ENCODE measurements at regions of chr1 and their contacts with region 1.

Region 1: DNA sequence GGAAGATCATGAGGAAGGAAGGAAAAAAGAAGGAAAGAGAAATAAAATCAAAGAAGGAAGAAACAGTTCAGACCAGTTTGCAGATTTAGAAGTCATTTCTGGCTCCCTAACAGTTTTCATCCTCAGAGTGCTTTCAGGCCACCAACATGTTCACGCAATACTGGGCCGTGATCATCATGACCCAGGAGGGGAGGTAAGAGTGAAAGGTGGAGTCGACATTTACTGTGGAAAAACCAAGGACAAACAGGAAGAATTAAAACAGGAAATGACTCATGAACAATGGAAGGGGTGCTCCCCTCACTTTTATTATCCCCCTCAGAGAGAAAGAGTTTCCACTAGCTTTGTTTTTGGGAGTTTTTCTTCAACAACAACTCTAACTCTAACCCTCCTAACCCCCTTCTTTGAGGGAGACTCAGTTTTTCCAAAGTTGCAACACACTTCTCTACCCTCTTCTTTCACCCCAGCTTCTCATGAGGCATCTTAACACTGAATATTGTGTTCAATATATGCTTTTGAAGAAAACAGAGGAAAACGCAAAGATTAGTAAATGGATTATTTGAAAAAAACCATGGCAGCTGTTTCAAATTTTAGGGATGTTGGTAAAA is 60.4 kb downstream of the VANGL2 start:
- DNase-seq: no peak
- H3K4me3 Mint-ChIP-seq: peak overlapping the region; percentile 56
- H3K27ac Mint-ChIP-seq: peak overlapping the region; percentile 99
- H3K4me1 Mint-ChIP-seq: peaks cover 87% of the 10 kb centered on the region
- H3K27me3 Mint-ChIP-seq: no peaks in the 10 kb centered on the region

Region 2: GRCh38 chr1:160428655-160429054 is 32.1 kb before region 1 on chr1:
- intact Hi-C with region 1: loop called (anchors 1 kb)
- DNase-seq: peak; percentile 15
- H3K4me3 Mint-ChIP-seq: no peak overlapping the region
- H3K27ac Mint-ChIP-seq: peak overlapping the region; percentile 91
- H3K4me1 Mint-ChIP-seq: peaks cover 59% of the 10 kb centered on the region
- H3K27me3 Mint-ChIP-seq: no peaks in the 10 kb centered on the region

Region 3: DNA sequence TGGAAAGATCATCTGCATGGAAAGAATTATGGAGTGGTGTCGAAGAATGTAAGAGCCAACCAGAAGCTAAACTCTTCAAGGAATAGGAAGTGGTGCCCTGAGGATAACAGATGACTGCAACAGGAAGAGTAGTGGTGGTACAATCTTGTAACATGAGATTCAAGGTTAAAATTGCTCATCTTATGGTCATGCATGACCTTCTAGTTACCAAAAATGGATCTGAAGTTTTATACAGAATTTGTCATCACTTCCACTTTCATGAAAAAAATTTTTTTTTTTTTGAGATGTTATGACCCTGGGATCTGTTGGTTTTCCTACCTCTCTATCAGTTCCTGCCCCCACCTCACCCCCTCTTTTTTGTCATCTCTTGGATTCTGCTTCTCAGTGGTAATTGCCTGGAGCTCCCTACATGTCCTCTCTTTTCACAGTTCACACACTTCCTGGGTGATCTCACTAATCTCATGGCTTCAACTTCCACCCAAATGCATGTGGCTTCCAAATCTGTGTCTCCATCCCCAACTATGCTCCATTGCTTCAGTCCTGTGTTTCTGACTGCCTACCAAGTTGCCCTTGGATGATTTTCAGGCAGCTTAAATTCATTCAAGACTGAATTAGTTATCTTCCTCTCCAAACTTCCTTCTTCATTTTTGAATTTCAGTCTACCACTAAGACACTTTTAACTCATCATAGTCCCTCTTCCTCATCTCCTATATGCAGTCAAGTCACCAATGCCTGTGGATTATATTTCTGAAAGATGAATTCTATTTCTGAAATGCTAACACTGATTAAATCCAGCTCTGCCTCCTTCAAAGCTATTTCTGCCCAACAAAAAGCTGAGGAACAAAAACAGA is 13.8 kb after region 1 on chr1:
- intact Hi-C with region 1: loop called (anchors 1 kb)
- DNase-seq: no peak
- H3K4me3 Mint-ChIP-seq: no peak overlapping the region
- H3K27ac Mint-ChIP-seq: no peak overlapping the region
- H3K4me1 Mint-ChIP-seq: no peaks in the 10 kb centered on the region
- H3K27me3 Mint-ChIP-seq: no peaks in the 10 kb centered on the region

Region 4: GRCh38 chr1:160618763-160619274 is 158.0 kb after region 1 on chr1:
- intact Hi-C with region 1: loop called (anchors 2 kb)
- DNase-seq: no peak
- H3K4me3 Mint-ChIP-seq: peak overlapping the region; percentile 24
- H3K27ac Mint-ChIP-seq: peak overlapping the region; percentile 51
- H3K4me1 Mint-ChIP-seq: peaks cover 76% of the 10 kb centered on the region
- H3K27me3 Mint-ChIP-seq: no peaks in the 10 kb centered on the region

Region 5: GRCh38 chr1:160629286-160630210 is 168.8 kb after region 1 on chr1:
- intact Hi-C with region 1: loop called (anchors 1 kb)
- DNase-seq: peak; percentile 76
- H3K4me3 Mint-ChIP-seq: peak overlapping the region; percentile 69
- H3K27ac Mint-ChIP-seq: peak overlapping the region; percentile 99
- H3K4me1 Mint-ChIP-seq: peaks cover 98% of the 10 kb centered on the region
- H3K27me3 Mint-ChIP-seq: no peaks in the 10 kb centered on the region